ENCODE measurements at regions of chrX and their contacts with region 1.

Region 1: DNA sequence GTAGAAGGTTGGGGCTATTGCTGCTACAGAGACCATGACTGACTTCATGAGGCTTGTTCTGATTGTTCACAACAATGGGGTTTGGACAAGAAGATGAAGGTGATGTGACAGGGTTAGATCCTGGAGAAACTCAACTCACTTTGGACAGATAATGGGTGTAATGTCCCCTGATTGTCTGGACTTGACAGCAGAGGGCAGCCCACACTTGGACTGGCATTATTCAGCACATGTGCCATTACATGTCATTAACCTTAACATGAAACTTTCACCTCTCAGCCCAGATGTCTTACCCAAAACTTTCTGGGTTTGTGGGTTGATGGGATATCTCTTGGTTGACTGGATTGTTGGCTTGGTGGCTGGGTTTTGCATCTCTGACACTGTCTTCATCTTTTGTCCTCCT is 101.5 kb downstream of the MXRA5 start:
- DNase-seq: peak; percentile 9
- H3K4me3 ChIP-seq: no peak overlapping the region
- H3K27ac ChIP-seq: no peak overlapping the region
- H3K4me1 ChIP-seq: no peaks in the 10 kb centered on the region
- H3K27me3 ChIP-seq: no peaks in the 10 kb centered on the region
- CTCF ChIP-seq: peak; percentile 34 to 53

Region 2: DNA sequence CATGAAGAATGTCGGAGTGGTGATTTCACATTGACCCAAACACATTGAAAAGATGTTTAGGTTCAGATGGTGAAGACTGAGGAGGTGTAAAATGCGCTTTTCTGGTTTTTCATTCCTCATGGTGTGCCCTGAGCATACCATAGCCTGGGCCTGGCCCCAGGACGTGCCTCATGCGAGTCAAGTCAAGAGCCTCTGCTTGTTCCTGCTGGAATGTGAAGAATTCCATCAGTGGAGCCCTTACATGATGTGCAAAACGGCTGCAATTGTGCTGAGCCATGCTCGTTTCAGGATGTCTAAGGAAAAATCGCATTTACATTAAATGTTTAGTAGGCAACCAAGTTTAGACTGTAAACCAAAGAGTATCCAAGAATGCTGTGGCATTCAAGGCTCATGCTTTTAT is 381.3 kb before region 1 on chrX:
- CTCF ChIA-PET with region 1: no interaction called
- dilution Hi-C with region 1: no loop called
- in situ Hi-C with region 1: no loop called
- intact Hi-C with region 1: no loop called
- DNase-seq: peak; percentile 4
- H3K4me3 ChIP-seq: no peak overlapping the region
- H3K27ac ChIP-seq: no peak overlapping the region
- H3K4me1 ChIP-seq: no peaks in the 10 kb centered on the region
- H3K27me3 ChIP-seq: no peaks in the 10 kb centered on the region
- CTCF ChIP-seq: no peak

Region 3: GRCh38 chrX:3176439-3176820 is 68.5 kb before region 1 on chrX:
- CTCF ChIA-PET with region 1: no interaction called
- dilution Hi-C with region 1: loop called (anchors 5 kb)
- in situ Hi-C with region 1: no loop called
- intact Hi-C with region 1: no loop called
- DNase-seq: no peak
- H3K4me3 ChIP-seq: no peak overlapping the region
- H3K27ac ChIP-seq: no peak overlapping the region
- H3K4me1 ChIP-seq: peaks cover 3% of the 10 kb centered on the region
- H3K27me3 ChIP-seq: no peaks in the 10 kb centered on the region
- CTCF ChIP-seq: no peak

Region 4: DNA sequence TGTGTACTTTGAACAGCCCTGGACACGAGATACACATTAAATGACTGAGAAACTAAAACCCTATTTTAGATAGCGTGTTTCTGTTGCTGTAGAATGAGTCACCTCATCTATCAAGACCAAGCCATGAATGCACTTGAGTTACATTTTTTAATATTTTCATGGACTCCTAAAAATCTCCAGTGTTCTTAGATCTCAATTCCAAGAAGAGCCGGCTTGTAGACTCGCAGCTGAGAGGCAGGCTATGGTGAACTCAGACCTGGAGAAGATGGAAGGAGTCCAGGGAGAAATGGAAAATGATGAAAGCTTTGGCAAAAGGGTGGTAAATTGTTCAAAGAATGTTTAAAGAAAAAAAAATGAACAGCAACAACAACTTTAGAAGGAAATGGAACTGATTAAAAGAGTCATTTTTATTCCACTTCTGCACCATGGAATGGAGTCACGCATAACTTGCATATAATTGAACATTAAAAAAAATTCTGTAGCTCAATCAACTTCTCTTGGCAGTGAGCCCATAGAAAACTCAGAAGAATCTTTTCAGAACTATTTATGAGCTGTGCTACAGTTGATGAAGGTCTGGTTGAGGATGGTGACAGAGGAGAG is 28.3 kb before region 1 on chrX:
- CTCF ChIA-PET with region 1: no interaction called
- dilution Hi-C with region 1: no loop called
- in situ Hi-C with region 1: no loop called
- intact Hi-C with region 1: no loop called
- DNase-seq: no peak
- H3K4me3 ChIP-seq: no peak overlapping the region
- H3K27ac ChIP-seq: no peak overlapping the region
- H3K4me1 ChIP-seq: no peaks in the 10 kb centered on the region
- H3K27me3 ChIP-seq: no peaks in the 10 kb centered on the region
- CTCF ChIP-seq: no peak

Region 5: GRCh38 chrX:3326681-3327080 is 81.7 kb after region 1 on chrX:
- CTCF ChIA-PET with region 1: no interaction called
- dilution Hi-C with region 1: loop called (anchors 5 kb)
- in situ Hi-C with region 1: no loop called
- intact Hi-C with region 1: no loop called
- DNase-seq: no peak
- H3K4me3 ChIP-seq: no peak overlapping the region
- H3K27ac ChIP-seq: no peak overlapping the region
- H3K4me1 ChIP-seq: no peaks in the 10 kb centered on the region
- H3K27me3 ChIP-seq: no peaks in the 10 kb centered on the region
- CTCF ChIP-seq: no peak

Region 6: DNA sequence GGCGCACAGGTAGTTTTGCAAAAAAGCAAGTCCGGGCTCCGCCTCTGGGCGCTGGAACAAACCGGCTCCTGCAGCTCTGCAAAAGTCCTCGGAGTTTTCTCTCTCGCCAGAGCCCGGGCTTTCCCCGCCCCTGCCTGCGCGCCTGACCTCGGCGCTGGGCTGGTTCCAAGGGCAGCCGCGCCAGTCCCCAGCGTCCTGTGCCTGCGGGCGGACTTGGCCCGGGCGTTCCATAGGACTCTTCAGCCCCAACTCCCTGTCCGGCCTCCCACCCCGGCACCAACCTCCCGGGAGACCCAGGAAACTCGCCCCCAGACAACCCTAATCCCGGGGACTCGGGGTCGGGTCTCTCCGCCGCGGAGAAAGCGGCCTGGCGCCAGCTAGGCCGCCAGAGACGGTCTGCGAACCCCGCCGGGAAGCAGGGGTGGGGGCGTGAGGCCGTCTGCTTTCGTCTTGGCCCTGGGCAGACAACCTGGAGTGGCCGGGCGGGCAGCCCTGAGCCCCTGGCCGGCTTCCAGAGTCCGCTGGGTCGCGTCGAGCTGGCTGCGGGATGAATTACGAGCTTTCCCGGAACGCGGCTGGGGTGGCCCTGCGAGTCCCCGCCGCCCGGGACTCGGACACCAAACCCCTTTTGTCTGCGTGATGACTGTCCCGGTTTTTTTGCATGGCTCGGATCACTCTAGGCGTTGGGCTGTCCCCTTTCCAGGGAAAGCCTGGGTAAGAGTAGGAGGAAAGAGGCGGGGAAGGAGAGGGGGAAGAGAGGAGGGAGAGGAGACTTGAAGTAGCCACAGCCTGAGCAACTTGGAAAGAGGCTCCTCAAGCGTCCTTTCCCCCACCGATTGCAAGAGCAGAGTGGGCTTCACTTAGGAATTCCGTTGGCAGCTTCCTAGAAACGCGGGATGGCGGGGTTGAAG is 100.6 kb after region 1 on chrX:
- CTCF ChIA-PET with region 1: no interaction called
- dilution Hi-C with region 1: no loop called
- in situ Hi-C with region 1: no loop called
- intact Hi-C with region 1: loop called (anchors 5 kb)
- DNase-seq: peak; percentile 63
- H3K4me3 ChIP-seq: peak overlapping the region; percentile 34 to 46 (median 36)
- H3K27ac ChIP-seq: no peak overlapping the region
- H3K4me1 ChIP-seq: no peaks in the 10 kb centered on the region
- H3K27me3 ChIP-seq: no peaks in the 10 kb centered on the region
- CTCF ChIP-seq: no peak

Region 7: GRCh38 chrX:3428792-3429191 is 183.8 kb after region 1 on chrX:
- CTCF ChIA-PET with region 1: no interaction called
- dilution Hi-C with region 1: no loop called
- in situ Hi-C with region 1: no loop called
- intact Hi-C with region 1: no loop called
- DNase-seq: no peak
- H3K4me3 ChIP-seq: no peak overlapping the region
- H3K27ac ChIP-seq: no peak overlapping the region
- H3K4me1 ChIP-seq: no peaks in the 10 kb centered on the region
- H3K27me3 ChIP-seq: no peaks in the 10 kb centered on the region
- CTCF ChIP-seq: no peak

Measured in mammary epithelial cell (primary cell).